Endothelial cell of umbilical vein (primary cell): ENCODE measurements at regions of chr12 and their contacts with region 1.

Region 1: DNA sequence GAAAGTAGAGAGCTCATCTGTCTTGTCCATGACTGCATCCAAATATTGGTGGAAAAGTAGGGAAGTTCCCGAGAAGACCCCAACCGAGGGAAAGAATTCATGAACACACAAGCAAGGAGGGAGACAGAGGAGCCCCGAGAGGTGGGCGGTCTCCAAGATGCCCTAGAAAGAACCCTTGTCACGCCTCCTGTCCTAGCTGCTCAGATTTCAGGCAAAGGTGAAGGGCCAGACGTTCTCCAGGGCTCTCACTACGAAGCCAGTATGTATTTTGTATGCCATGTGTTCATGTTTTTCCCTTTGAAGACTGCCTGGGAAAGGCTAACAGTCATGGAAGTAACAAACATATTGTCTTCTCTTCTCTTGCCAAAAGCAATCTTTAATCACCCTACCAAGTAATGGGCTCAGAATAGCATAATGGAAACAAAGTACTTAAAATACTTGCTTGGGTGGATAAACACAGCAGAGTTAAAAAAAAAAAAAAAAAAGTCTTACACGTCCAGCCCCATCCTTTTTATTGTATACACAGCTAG is 99.2 kb upstream of the TBX3 start:
- DNase-seq: no peak
- H3K4me3 ChIP-seq: no peak overlapping the region
- H3K27ac ChIP-seq: no peak overlapping the region
- H3K4me1 ChIP-seq: no peaks in the 10 kb centered on the region
- H3K27me3 ChIP-seq: no peaks in the 10 kb centered on the region
- CTCF ChIP-seq: no peak
- POLR2A ChIP-seq: no peak

Region 2: GRCh38 chr12:114616081-114616480 is 167.1 kb before region 1 on chr12:
- CTCF ChIA-PET with region 1: no interaction called
- POLR2A ChIA-PET with region 1: interaction called, 10 read pairs
- dilution Hi-C with region 1: no loop called
- intact Hi-C with region 1: no loop called
- DNase-seq: no peak
- H3K4me3 ChIP-seq: no peak overlapping the region
- H3K27ac ChIP-seq: no peak overlapping the region
- H3K4me1 ChIP-seq: no peaks in the 10 kb centered on the region
- H3K27me3 ChIP-seq: no peaks in the 10 kb centered on the region
- CTCF ChIP-seq: no peak
- POLR2A ChIP-seq: no peak